ENCODE measurements at regions of chr12 and their contacts with region 1.

Region 1: DNA sequence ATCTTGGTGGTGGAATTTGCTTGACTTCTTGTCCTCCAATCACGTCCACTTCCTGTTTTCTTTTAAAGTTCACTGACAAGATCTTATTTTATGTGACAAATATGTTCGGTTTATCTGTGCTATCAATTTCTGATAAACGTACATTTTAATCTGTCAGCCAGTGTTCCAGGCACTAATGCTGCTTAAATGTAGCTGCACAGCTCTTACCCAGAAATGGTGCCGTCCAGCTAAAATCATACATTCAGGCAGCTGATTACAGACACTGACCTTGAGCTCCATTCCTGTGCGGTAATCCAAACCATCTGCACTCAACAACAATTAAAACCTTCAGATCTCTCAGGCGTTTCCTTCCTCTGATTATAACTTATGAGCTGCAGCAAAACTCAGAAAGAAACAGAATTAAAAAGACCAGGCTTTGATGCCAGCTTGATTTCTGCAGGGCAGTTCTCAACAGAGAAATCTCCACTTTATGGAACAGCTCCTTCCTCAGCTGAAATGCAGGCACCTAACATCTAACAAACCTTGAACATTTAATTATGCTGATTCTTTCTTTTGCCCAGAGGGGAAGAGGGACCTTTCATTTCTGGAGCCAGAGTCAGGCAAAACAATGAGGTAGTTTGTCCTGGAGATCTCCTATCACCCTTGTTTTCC is 26.4 kb upstream of the RASSF3 start:
- DNase-seq: no peak
- H3K4me3 ChIP-seq: no peak overlapping the region
- H3K27ac ChIP-seq: no peak overlapping the region
- H3K4me1 ChIP-seq: no peaks in the 10 kb centered on the region
- H3K27me3 ChIP-seq: no peaks in the 10 kb centered on the region
- CTCF ChIP-seq: no peak

Region 2: GRCh38 chr12:65269603-65270002 is 685.7 kb after region 1 on chr12:
- CTCF ChIA-PET with region 1: interaction called, 12 read pairs
- POLR2A ChIA-PET with region 1: no interaction called
- intact Hi-C with region 1: no loop called
- DNase-seq: no peak
- H3K4me3 ChIP-seq: no peak overlapping the region
- H3K27ac ChIP-seq: no peak overlapping the region
- H3K4me1 ChIP-seq: peaks cover 9% of the 10 kb centered on the region; the same call in 1 of the 2 replicates
- H3K27me3 ChIP-seq: no peaks in the 10 kb centered on the region
- CTCF ChIP-seq: no peak

Measured in PC-9 (cell line).